Activated naive CD4-positive, alpha-beta T cell treated with anti-CD3 and anti-CD28 coated beads for 36 hours (primary cell): ENCODE measurements at regions of chr6 and their contacts with region 1.

Region 1: GRCh38 chr6:2186516-2186915 is 58.9 kb downstream of the GMDS start:
- DNase-seq: peak; percentile 57
- H3K4me3 Mint-ChIP-seq: no peak overlapping the region
- H3K27ac Mint-ChIP-seq: no peak overlapping the region
- H3K4me1 Mint-ChIP-seq: peaks cover 39% of the 10 kb centered on the region
- H3K27me3 Mint-ChIP-seq: peaks cover 8% of the 10 kb centered on the region

Region 2: GRCh38 chr6:1770968-1771723 is 415.4 kb before region 1 on chr6:
- CTCF ChIA-PET with region 1: no interaction called
- intact Hi-C with region 1: loop called (anchors 2 kb)
- DNase-seq: peak; percentile 78
- H3K4me3 Mint-ChIP-seq: no peak overlapping the region
- H3K27ac Mint-ChIP-seq: no peak overlapping the region
- H3K4me1 Mint-ChIP-seq: peaks cover 47% of the 10 kb centered on the region
- H3K27me3 Mint-ChIP-seq: no peaks in the 10 kb centered on the region

Region 3: GRCh38 chr6:2037237-2037926 is 149.1 kb before region 1 on chr6:
- CTCF ChIA-PET with region 1: no interaction called
- intact Hi-C with region 1: loop called (anchors 5 kb)
- DNase-seq: peak; percentile 31
- H3K4me3 Mint-ChIP-seq: no peak overlapping the region
- H3K27ac Mint-ChIP-seq: no peak overlapping the region
- H3K4me1 Mint-ChIP-seq: peaks cover 25% of the 10 kb centered on the region
- H3K27me3 Mint-ChIP-seq: peaks cover 5% of the 10 kb centered on the region